K562 (cell line): ENCODE measurements at regions of chr20 and their contacts with region 1.

Region 1: DNA sequence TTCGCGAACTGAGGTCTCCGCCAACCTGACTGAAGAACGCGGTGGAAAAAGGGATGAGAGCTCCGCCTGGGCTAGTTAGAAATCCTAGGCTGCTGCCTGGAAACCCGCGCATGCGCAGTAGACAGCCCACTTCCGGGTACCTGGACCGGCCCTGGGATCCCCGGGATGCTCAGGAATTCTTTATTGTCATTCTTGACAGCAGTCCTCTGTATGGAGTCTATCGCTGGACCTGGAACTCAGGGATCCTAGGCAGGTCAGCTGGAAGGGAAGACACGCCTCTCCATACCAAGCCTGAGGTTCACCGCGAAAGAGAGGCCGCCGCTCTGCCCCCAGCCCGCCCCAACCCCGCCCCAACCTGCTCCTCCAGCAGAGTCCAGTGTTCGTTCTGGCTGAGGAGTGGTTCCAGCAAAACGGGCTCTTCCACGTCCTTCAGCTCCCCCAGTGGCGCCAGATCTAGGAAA is 1379.2 kb upstream of the DEFB115 start:
- DNase-seq: peak in 3 of 4 experiments; percentile 27 to 91 (median 37)
- ATAC-seq: peak; percentile 85
- H3K4me3 ChIP-seq: peak overlapping the region; percentile 17
- H3K27ac ChIP-seq: no peak overlapping the region
- H3K4me1 ChIP-seq: peaks cover 2 to 27% of the 10 kb centered on the region in 2 experiments; a peak in 3 of 5 replicates
- H3K27me3 ChIP-seq: no peaks in the 10 kb centered on the region
- CTCF ChIP-seq: no peak
- EP300 ChIP-seq: no peak
- POLR2A ChIP-seq: no peak
- RAD21 ChIP-seq: no peak

Region 2: GRCh38 chr20:30811885-30812671 is 933.8 kb after region 1 on chr20:
- CTCF ChIA-PET with region 1: no interaction called
- POLR2A ChIA-PET with region 1: interaction called, 4 read pairs
- in situ Hi-C with region 1: loop called (anchors 5 kb)
- intact Hi-C with region 1: no loop called
- DNase-seq: peak; percentile 65 to 81 (median 78)
- ATAC-seq: peak; percentile 66
- H3K4me3 ChIP-seq: peak overlapping the region; percentile 25
- H3K27ac ChIP-seq: no peak overlapping the region
- H3K4me1 ChIP-seq: peaks cover 0 to 22% of the 10 kb centered on the region in 2 experiments; a peak in 2 of 5 replicates
- H3K27me3 ChIP-seq: peaks cover 9 to 21% of the 10 kb centered on the region in 2 experiments; a peak in 3 of 5 replicates
- CTCF ChIP-seq: no peak
- EP300 ChIP-seq: no peak
- POLR2A ChIP-seq: no peak
- RAD21 ChIP-seq: no peak